Activated CD4-positive, alpha-beta memory T cell treated with anti-CD3 and anti-CD28 coated beads for 36 hours (primary cell): ENCODE measurements at regions of chr10 and their contacts with region 1.

Region 1: GRCh38 chr10:8577686-8578085 is 523.2 kb downstream of the GATA3 start:
- DNase-seq: peak; percentile 38
- H3K4me3 Mint-ChIP-seq: peak overlapping the region; percentile 13
- H3K27ac Mint-ChIP-seq: peak overlapping the region; percentile 74
- H3K4me1 Mint-ChIP-seq: peaks cover 49% of the 10 kb centered on the region
- H3K27me3 Mint-ChIP-seq: peaks cover 26% of the 10 kb centered on the region

Region 2: GRCh38 chr10:8137726-8138125 is 440.0 kb before region 1 on chr10:
- CTCF ChIA-PET with region 1: no interaction called
- POLR2A ChIA-PET with region 1: interaction called, 3 read pairs
- intact Hi-C with region 1: loop called (anchors 2 kb)
- DNase-seq: peak; percentile 43
- H3K4me3 Mint-ChIP-seq: peak overlapping the region; percentile 59
- H3K27ac Mint-ChIP-seq: peak overlapping the region; percentile 86
- H3K4me1 Mint-ChIP-seq: peaks cover 57% of the 10 kb centered on the region
- H3K27me3 Mint-ChIP-seq: peaks cover 4% of the 10 kb centered on the region

Region 3: DNA sequence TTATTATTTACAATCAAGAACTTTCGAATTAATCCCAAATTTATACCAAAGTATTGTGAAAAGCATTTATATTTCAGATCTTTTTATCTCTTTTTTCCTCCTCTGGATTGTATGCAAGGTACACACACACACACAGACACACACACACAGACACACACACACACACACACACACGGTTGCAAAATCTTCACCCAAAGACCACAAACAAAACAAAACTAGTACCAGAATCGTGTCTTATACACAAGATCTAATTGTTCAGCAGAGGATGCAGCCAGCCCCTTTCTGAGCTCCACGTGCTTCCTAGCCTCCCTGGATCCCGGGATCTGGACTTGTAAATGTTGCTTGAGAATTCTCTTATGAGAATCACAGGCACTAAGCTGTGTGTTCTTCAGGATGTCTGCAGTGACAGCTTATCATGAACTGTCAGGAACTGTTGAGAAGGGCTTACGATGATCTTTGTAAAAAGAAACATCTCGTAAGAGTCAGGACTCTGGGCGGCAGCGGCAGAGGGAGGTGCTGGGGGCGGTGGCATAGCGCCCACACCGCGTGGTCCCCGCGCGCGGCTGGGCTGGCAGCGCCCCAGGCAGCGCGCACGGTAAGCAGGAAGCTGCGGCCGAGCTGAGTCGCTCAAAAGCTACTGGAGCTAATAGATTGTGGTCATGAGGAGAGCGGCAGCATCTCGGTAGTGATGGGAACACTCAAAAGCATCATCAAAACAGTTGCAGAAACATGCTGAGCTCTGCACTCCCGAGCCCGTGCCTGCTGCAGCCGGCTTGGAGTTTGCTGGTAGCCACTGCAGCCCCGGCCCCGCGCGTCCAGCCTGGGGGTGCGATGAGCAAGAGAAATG is 245.6 kb before region 1 on chr10:
- CTCF ChIA-PET with region 1: interaction called, 6 read pairs
- POLR2A ChIA-PET with region 1: no interaction called
- intact Hi-C with region 1: loop called (anchors 10 kb)
- DNase-seq: peak; percentile 90
- H3K4me3 Mint-ChIP-seq: peak overlapping the region; percentile 72
- H3K27ac Mint-ChIP-seq: peak overlapping the region; percentile 79
- H3K4me1 Mint-ChIP-seq: peaks cover 72% of the 10 kb centered on the region
- H3K27me3 Mint-ChIP-seq: no peaks in the 10 kb centered on the region

Region 4: GRCh38 chr10:8616166-8616565 is 38.5 kb after region 1 on chr10:
- CTCF ChIA-PET with region 1: no interaction called
- POLR2A ChIA-PET with region 1: no interaction called
- intact Hi-C with region 1: no loop called
- DNase-seq: no peak
- H3K4me3 Mint-ChIP-seq: no peak overlapping the region
- H3K27ac Mint-ChIP-seq: no peak overlapping the region
- H3K4me1 Mint-ChIP-seq: peaks cover 12% of the 10 kb centered on the region
- H3K27me3 Mint-ChIP-seq: peaks cover 1% of the 10 kb centered on the region

Region 5: GRCh38 chr10:9024210-9024609 is 446.5 kb after region 1 on chr10:
- CTCF ChIA-PET with region 1: no interaction called
- POLR2A ChIA-PET with region 1: no interaction called
- intact Hi-C with region 1: loop called (anchors 2 kb)
- DNase-seq: no peak
- H3K4me3 Mint-ChIP-seq: no peak overlapping the region
- H3K27ac Mint-ChIP-seq: peak overlapping the region; percentile 67
- H3K4me1 Mint-ChIP-seq: peaks cover 53% of the 10 kb centered on the region
- H3K27me3 Mint-ChIP-seq: peaks cover 11% of the 10 kb centered on the region